A549 (cell line): ENCODE measurements at regions of chr21 and their contacts with region 1.

Region 1: DNA sequence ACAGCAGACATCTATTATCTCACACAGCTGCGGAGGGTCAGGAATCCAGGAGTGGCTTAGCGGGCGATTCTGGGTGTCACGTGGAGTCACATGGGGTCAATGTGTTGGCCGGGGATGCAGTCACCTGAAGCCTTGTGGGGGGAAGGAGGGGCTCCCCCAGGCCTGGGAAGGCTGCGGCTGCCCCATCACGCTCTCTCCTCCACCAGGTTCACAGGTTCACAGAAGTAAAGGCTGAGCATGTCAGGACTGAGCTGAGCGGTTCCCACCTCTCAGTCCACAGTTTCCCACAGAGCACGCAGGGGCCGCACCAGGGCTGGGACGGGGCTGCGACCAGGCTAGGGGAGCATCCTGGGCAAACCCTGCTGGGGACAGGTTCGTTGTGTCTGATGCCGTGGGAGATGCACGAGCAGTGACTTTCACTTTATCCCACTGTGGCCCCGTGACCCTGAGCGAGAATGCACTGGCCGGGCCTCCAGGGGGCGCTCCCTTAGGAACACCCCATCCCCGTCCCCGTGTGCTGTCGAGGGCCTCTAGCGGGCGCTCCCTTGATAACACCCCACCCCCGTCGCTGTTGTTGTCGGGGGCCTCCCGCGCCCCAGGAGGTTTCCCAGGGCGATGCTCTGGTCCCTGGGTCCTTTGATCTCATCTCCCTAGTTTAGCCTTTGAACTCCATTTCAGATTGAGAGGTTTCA is 73.2 kb upstream of the TRAPPC10 start:
- DNase-seq: peak; percentile 68 to 80
- ATAC-seq: peak; percentile 95 to 98
- H3K4me3 ChIP-seq: peak overlapping the region; percentile 33
- H3K27ac ChIP-seq: peak overlapping the region; percentile 43 to 81; a peak in 5 of 6 replicates
- H3K4me1 ChIP-seq: 0 out of 3 replicates have a peak, but pooled peaks cover 3% of the 10 kb centered on the region
- CTCF ChIP-seq: peak; percentile 93
- EP300 ChIP-seq: no peak
- POLR2A ChIP-seq: no peak
- RAD21 ChIP-seq: peak; percentile 67 to 68

Region 2: GRCh38 chr21:43619856-43620255 is 319.0 kb before region 1 on chr21:
- CTCF ChIA-PET with region 1: no interaction called
- POLR2A ChIA-PET with region 1: no interaction called
- DNase-seq: peak in 1 of 2 experiments; percentile 78
- ATAC-seq: peak in 1 of 2 experiments; percentile 77; a peak in 3 of 6 replicates
- H3K4me3 ChIP-seq: no peak overlapping the region
- H3K27ac ChIP-seq: peak overlapping the region; percentile 47 to 74; a peak in 4 of 6 replicates
- H3K4me1 ChIP-seq: no peaks in the 10 kb centered on the region
- CTCF ChIP-seq: no peak
- EP300 ChIP-seq: no peak
- POLR2A ChIP-seq: no peak
- RAD21 ChIP-seq: peak in 1 of 2 experiments; percentile 67; a peak in 3 of 5 replicates

Region 3: DNA sequence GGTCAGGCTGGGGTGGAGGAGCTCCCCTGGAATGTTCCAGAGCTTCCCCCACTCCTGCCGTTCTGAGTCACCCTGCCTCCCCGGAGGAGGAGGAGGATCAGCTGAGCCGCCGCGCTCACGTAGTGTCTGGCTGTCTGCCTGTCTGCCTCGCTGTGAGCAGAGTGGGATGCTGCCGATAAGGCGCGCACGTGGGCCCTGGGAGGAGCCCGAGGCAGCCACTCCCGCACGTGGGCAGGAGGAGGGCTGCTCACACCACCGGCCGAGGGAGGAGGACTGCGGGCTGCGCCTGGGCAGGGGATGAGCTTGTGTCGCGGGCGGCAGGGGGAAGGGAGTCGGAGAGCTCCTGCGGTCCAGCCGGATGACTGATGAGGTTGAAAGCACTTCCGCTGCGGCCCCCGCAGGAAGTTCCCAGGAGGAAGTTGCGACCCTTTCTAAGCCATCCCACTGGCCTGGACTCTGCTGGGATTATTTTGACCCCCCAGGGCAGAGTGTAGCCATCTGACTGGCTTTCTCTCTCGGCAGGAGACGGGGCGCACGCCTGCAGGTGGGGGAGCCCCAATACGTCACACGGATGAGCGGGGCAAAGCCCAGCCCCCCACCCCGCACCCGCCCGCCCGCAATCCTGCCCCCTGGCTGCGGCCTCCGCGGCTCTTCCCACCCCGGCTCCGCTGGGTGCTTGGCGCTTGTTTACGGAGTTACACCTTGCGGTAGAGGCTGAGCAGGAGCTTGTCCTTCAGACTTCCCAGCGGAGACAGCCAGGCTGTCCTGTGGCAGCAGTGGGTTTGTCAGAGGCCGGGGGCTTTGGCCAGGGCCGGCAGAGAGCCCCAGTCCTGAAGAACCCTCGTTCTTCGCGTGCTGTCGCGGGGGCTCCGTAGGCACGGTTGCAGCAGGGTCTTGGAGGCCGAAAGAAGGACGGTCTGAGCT is 210.2 kb before region 1 on chr21:
- CTCF ChIA-PET with region 1: no interaction called
- POLR2A ChIA-PET with region 1: no interaction called
- DNase-seq: peak; percentile 68 to 88
- ATAC-seq: peak; percentile 77 to 78
- H3K4me3 ChIP-seq: peak overlapping the region; percentile 44
- H3K27ac ChIP-seq: peak overlapping the region; percentile 98 to 99
- H3K4me1 ChIP-seq: peaks cover 95% of the 10 kb centered on the region
- CTCF ChIP-seq: no peak
- EP300 ChIP-seq: peak; percentile 64 to 79; a peak in 3 of 5 replicates
- POLR2A ChIP-seq: no peak; the same call in 1 of the 2 replicates
- RAD21 ChIP-seq: 0 out of 5 replicates have a peak, but pooled peaks of 1 of the 2 experiments have one; percentile 22

Region 4: DNA sequence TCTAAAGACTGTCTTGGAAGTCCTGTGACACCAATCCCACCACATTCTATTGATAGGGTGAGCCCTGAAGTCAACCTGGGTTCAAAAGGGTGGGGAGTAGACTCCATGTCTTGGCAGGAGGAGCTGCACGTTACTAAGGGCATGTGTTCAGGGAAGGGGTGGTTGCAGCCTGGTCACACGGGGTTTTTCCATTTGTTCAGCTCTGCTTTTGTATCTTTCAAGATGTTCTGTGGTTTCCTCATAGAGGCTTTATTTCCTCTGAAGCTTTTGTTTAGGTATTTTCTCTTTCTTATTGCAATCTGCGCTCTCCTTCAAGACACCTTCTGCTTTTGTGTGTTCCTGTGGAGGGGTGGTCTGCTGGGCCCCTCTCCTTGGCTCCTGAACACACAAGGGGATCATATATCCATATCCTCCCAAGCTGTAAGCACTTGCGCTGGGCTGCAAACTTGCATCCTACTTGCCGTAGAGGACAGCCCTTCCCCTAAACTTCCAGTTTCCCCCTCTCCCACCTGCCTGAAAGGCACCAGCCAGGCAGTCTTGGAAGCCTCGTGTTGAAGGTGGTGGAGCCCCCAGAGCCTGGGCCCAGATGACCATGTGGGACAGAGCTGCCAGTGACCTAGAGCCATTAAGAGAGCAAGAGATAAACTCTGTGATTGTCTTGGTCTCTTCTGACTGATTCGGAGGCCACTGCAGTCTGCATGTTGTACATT is 10.8 kb after region 1 on chr21:
- CTCF ChIA-PET with region 1: interaction called, 20 read pairs
- POLR2A ChIA-PET with region 1: no interaction called
- DNase-seq: no peak
- ATAC-seq: no peak
- H3K4me3 ChIP-seq: no peak overlapping the region
- H3K27ac ChIP-seq: no peak overlapping the region
- H3K4me1 ChIP-seq: no peaks in the 10 kb centered on the region
- CTCF ChIP-seq: no peak
- EP300 ChIP-seq: no peak
- POLR2A ChIP-seq: no peak
- RAD21 ChIP-seq: no peak